Caco-2 (cell line): ENCODE measurements at regions of chr3 and their contacts with region 1.

Region 1: DNA sequence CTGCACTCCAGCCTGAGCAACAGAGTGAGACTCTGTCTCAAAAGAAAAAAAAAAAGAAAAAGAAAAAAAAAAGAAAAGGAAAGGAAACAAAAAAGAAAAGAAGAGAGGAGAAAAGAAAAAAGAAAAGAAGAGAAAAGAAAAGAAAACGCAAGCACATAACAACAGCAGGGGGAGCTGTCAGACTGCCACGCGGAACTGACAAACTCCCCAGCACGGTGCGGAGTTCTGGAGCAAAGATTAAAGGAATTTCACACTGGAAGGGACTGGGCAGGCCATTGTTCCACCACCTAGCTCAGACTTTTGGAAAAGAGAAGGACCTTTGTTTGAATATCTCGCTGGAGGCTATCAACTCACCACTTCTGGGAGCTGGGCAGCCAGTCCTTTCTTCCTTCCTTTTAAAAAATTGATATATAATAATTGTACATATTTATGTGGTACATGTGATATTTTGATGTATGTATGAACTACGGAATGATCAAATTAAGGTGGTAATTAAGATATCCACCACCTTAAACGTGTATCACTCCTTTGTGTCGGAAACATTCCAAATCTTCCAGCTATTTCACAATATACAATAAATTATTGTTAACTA is 40.5 kb downstream of the DPPA2 start:
- DNase-seq: peak; percentile 63 to 65
- H3K4me3 ChIP-seq: no peak overlapping the region
- H3K4me3 Mint-ChIP-seq: no peak overlapping the region
- H3K27ac Mint-ChIP-seq: no peak overlapping the region
- H3K4me1 ChIP-seq: no peaks in the 10 kb centered on the region
- H3K4me1 Mint-ChIP-seq: peaks cover 7% of the 10 kb centered on the region
- H3K27me3 ChIP-seq: no peaks in the 10 kb centered on the region
- H3K27me3 Mint-ChIP-seq: no peaks in the 10 kb centered on the region
- CTCF ChIP-seq: peak; percentile 64 to 73

Region 2: GRCh38 chr3:109346770-109347295 is 71.0 kb after region 1 on chr3:
- CTCF ChIA-PET with region 1: no interaction called
- POLR2A ChIA-PET with region 1: no interaction called
- intact Hi-C with region 1: loop called (anchors 1 kb)
- DNase-seq: no peak
- H3K4me3 ChIP-seq: no peak overlapping the region
- H3K4me3 Mint-ChIP-seq: no peak overlapping the region
- H3K27ac Mint-ChIP-seq: no peak overlapping the region
- H3K4me1 ChIP-seq: no peaks in the 10 kb centered on the region
- H3K4me1 Mint-ChIP-seq: no peaks in the 10 kb centered on the region
- H3K27me3 ChIP-seq: no peaks in the 10 kb centered on the region
- H3K27me3 Mint-ChIP-seq: no peaks in the 10 kb centered on the region
- CTCF ChIP-seq: no peak

Region 3: DNA sequence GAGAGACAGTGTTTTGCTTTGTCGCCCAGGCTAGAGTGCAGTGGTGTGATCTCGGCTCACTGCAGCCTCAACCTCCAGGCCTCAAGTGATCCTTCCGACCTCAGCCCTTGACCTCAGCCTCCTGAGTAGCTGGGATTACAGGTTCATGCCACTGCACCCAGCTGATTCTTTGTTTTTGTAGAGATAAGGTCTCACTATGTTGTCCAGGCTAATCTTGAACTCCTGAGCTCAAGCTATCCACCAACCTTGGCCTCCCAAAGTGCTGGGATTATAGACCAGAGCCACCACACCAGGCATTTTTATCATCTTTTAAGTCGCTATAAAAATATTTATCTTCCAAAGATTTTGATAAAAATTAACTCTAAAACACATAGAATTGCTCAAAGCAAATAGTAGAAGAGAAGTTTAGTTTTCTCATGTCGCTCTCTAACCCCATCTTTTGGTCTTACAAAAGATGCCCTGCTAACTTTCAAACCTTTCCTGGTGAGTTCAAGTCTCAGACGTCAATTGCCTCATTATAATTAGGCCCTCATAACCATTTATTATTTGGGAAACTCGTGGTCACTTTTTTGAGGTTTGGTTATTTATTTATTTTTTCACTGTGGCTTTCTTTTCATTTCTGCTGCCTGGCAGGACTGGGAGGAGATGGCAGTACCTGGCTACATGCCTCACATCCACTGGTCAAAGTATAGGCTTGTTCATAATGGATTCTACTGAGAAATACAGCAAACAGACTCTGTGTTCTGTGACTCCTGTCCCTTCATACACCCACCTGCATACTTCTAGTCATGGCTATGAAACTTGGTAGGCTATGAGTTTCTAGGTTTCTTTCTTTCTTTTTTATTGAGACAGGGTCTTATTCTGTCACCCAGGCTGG is 109.9 kb after region 1 on chr3:
- CTCF ChIA-PET with region 1: no interaction called
- POLR2A ChIA-PET with region 1: no interaction called
- intact Hi-C with region 1: loop called (anchors 1 kb)
- DNase-seq: peak; percentile 43 to 66
- H3K4me3 ChIP-seq: no peak overlapping the region
- H3K4me3 Mint-ChIP-seq: no peak overlapping the region
- H3K27ac Mint-ChIP-seq: no peak overlapping the region
- H3K4me1 ChIP-seq: 0 out of 2 replicates have a peak, but pooled peaks cover 16% of the 10 kb centered on the region
- H3K4me1 Mint-ChIP-seq: peaks cover 8% of the 10 kb centered on the region
- H3K27me3 ChIP-seq: no peaks in the 10 kb centered on the region
- H3K27me3 Mint-ChIP-seq: no peaks in the 10 kb centered on the region
- CTCF ChIP-seq: no peak

Region 4: GRCh38 chr3:109396806-109397205 is 121.0 kb after region 1 on chr3:
- CTCF ChIA-PET with region 1: interaction called, 20 read pairs
- POLR2A ChIA-PET with region 1: no interaction called
- intact Hi-C with region 1: loop called (anchors 1 kb)
- DNase-seq: peak in 1 of 2 experiments; percentile 30
- H3K4me3 ChIP-seq: no peak overlapping the region
- H3K4me3 Mint-ChIP-seq: no peak overlapping the region
- H3K27ac Mint-ChIP-seq: peak overlapping the region; percentile 30
- H3K4me1 ChIP-seq: peaks cover 8% of the 10 kb centered on the region
- H3K4me1 Mint-ChIP-seq: no peaks in the 10 kb centered on the region
- H3K27me3 ChIP-seq: no peaks in the 10 kb centered on the region
- H3K27me3 Mint-ChIP-seq: no peaks in the 10 kb centered on the region
- CTCF ChIP-seq: no peak

Region 5: GRCh38 chr3:109532257-109533216 is 256.7 kb after region 1 on chr3:
- CTCF ChIA-PET with region 1: no interaction called
- POLR2A ChIA-PET with region 1: no interaction called
- intact Hi-C with region 1: loop called (anchors 5 kb)
- DNase-seq: peak; percentile 54 to 69
- H3K4me3 ChIP-seq: no peak overlapping the region
- H3K4me3 Mint-ChIP-seq: no peak overlapping the region
- H3K27ac Mint-ChIP-seq: no peak overlapping the region
- H3K4me1 ChIP-seq: no peaks in the 10 kb centered on the region
- H3K4me1 Mint-ChIP-seq: no peaks in the 10 kb centered on the region
- H3K27me3 ChIP-seq: no peaks in the 10 kb centered on the region
- H3K27me3 Mint-ChIP-seq: no peaks in the 10 kb centered on the region
- CTCF ChIP-seq: peak in 1 of 2 experiments; percentile 32

Region 6: DNA sequence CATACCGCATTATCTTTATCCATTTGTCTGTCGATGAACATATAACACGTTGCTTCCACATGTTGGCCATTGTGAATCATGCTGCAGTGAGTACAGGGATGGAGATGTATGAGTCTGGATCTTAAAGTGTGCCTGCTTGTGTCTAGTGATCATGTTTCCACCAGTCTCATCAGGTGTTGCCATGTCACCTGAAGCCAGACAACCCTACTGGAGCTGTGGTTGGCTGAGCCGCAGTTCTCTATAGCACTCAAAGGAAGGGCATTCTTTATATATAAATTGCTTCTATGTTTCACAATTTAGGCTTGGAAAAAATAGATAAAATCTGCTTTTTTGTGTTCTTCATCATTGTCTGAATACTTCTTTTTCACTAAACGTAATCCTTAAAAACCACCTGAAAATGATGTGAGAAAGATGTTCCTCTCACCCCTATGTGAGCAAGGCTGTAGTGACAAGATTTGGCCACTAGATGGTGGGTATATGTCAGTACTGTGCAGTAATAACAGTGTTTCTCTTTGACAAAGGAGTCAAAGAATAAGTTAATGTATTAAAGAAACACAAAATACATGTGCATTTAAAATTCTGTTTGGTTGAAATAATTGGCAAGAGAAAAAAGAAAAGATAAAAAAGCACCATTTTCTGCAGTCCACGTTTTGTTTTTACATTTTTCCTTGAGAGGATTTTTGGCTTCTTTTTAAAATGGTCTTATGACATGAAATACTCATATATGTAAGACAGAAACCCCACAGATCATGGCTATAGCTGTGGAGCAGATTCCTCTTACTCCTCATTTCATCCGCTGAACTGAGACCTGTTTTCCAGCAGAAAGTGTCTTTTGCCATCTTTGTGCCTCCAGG is 456.0 kb after region 1 on chr3:
- CTCF ChIA-PET with region 1: no interaction called
- POLR2A ChIA-PET with region 1: no interaction called
- intact Hi-C with region 1: loop called (anchors 10 kb)
- DNase-seq: peak; percentile 46 to 52
- H3K4me3 ChIP-seq: no peak overlapping the region
- H3K4me3 Mint-ChIP-seq: no peak overlapping the region
- H3K27ac Mint-ChIP-seq: no peak overlapping the region
- H3K4me1 ChIP-seq: no peaks in the 10 kb centered on the region
- H3K4me1 Mint-ChIP-seq: no peaks in the 10 kb centered on the region
- H3K27me3 ChIP-seq: no peaks in the 10 kb centered on the region
- H3K27me3 Mint-ChIP-seq: no peaks in the 10 kb centered on the region
- CTCF ChIP-seq: peak; percentile 78 to 83